ENCODE measurements at regions of chr17 and their contacts with region 1.

Region 1: DNA sequence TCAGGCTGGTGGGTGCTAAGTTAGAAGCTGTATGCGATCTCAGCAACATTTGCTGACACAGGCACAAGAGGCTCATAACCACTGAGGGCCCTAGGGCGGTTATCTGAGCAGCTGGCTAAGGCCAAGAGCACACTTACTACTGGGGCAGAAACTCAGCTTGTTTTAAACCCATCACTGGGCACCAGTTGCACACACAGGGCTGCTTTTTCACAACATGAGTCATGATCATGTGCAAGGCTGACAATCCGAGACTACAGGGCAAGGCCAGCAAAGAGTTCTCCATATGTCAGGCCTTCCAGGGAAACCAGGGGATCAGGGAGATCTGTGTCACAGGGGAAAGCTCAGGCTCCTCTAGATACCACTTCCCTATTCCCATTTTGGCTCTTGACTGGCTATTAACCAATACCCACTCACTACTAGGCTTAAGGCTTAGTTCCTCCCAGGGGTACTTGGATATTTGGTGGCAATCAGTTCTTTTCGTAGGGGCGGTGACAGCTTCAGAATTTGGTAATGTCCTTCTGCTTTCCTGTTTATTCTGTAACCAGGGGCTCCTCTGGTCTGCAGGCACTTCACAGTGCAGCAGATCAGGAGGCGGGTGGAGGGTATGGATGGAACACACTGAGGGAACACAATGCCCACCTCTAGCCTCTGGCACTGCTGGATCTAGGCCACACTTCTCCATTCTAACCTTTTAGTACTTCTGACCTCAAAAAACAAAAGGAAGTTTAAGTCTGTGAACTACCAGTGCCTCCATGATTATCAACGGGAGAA is 44.9 kb upstream of the ERN1 start:
- DNase-seq: peak; percentile 33 to 79
- H3K4me3 ChIP-seq: no peak overlapping the region
- H3K27ac ChIP-seq: peak overlapping the region; percentile 84 to 85
- H3K4me1 ChIP-seq: peaks cover 14 to 48% of the 10 kb centered on the region in 2 donors
- H3K27me3 ChIP-seq: no peaks in the 10 kb centered on the region
- CTCF ChIP-seq: no peak

Region 2: GRCh38 chr17:64230795-64231408 is 56.0 kb after region 1 on chr17:
- intact Hi-C with region 1: loop called (anchors 5 kb)
- DNase-seq: peak in 1 of 2 donors; percentile 70
- H3K4me3 ChIP-seq: peak overlapping the region in 1 of 2 donors; percentile 9
- H3K27ac ChIP-seq: peak overlapping the region; percentile 82 to 90
- H3K4me1 ChIP-seq: peaks cover 5 to 23% of the 10 kb centered on the region in 2 donors
- H3K27me3 ChIP-seq: no peaks in the 10 kb centered on the region
- CTCF ChIP-seq: no peak

Region 3: DNA sequence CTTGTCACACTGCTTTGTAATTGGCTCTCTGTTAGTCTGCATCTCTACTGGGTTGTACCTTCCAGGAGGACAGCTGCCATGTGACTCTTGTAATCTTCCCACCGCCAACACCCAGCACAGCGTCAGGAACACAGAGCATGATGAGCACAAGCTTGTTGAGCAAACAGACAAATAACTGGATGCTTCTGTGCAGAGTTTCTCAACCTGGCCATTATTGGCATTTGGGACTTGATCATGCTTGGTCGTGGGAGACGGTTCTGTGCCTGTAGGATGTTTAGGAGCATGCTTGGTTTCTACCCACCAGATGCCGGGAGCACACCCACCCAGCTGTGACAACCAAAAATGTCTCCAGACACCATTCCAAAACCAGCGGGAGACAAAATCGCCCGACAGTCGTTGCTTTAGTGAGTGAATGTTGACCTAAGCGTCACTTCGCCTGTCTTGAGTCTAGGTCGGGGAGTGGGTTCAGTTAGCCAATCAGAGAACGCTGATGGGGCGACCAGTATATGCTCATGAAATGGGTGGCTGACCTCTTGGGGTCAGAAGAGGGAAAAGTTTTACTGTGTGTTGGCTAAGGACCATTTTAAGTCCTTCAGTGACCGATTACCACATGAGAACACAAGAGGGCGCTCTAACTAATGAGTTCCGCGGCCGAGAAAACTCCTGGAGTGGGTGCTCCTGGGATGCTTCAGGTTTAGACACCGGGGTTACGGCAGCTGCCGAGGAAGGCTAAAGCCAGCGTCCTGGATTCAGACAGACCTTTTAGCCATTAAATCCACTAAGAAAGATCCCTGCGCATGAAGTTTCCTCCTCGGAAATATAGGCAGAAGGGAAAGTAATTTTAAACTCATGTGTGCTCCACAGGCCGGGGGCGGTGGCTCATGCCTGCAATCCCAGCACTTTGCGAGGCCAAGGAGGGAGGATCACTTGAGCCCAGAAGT is 146.0 kb after region 1 on chr17:
- intact Hi-C with region 1: no loop called
- DNase-seq: peak in 1 of 2 donors; percentile 80
- H3K4me3 ChIP-seq: peak overlapping the region in 1 of 2 donors; percentile 24
- H3K27ac ChIP-seq: no peak overlapping the region
- H3K4me1 ChIP-seq: peaks cover 0 to 6% of the 10 kb centered on the region in 2 donors
- H3K27me3 ChIP-seq: no peaks in the 10 kb centered on the region
- CTCF ChIP-seq: peak; percentile 67 to 74 (median 72)